ENCODE measurements at regions of chr12 and their contacts with region 1.

Region 1: DNA sequence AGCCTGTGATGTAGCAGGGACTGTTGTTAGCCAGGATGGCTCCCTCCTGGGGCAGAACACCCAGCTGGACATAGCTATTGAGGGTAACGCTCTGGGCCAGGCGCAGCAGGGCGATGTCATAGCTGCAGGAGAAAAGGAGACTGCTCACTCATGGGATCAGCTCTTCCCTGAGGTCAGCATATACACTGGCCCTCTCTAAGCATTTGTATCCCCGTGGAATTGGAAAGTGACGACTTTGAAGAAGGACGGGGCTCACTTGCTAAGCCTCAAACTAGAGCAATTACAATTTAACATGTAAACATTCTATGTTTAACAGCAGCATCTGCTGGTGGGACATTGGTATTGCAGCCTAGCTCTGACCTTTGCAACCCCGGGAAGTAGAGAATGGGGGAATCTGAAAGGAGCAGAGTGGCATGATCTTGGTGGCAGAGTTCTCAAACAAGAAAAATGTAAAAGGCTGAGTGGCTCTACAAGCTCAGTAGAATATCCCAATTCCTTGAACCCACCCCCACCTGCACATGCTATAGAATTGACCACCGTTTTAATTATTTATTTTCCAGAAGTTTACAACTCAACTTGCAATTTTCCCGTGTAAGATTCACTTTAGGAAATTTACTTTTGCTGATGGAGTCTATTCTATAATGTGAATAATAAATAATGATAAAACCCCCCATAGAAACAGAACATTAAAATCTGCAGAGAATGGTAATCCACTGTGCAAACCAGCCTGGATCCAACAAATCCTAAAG is 5.0 kb downstream of the CELA1 start:
- DNase-seq: peak; percentile 73
- CTCF ChIP-seq: peak; percentile 98

Region 2: GRCh38 chr12:50763639-50764285 is 577.7 kb before region 1 on chr12 and contains the start of gene ATF1:
- CTCF ChIA-PET with region 1: interaction called, 11 read pairs
- POLR2A ChIA-PET with region 1: no interaction called
- DNase-seq: peak; percentile 94
- CTCF ChIP-seq: no peak

Region 3: GRCh38 chr12:51047655-51048540 is 293.5 kb before region 1 on chr12 and contains the start of gene LETMD1:
- CTCF ChIA-PET with region 1: interaction called, 20 read pairs
- POLR2A ChIA-PET with region 1: no interaction called
- DNase-seq: peak; percentile 94
- CTCF ChIP-seq: peak; percentile 92

Region 4: DNA sequence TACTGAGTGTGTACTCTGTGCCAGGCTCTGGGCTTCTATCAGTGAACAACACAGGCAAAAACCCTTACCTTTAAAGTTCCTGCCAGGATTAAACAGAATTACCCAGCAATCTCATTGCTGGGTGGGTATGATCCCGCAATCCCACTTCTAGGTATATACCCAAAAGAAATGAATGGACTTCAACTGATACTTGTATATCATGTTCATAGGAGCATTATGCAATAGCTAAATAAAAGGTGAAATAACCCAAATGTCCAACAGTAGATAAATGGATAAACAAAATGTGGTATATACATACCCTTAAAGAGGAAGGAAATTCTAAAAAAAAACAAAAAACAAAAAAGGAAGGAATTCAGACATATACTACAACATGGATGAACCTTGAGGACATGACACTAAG is 88.2 kb before region 1 on chr12:
- CTCF ChIA-PET with region 1: interaction called, 14 read pairs
- POLR2A ChIA-PET with region 1: no interaction called
- DNase-seq: no peak
- CTCF ChIP-seq: no peak

Region 5: GRCh38 chr12:51270067-51270970 is 71.1 kb before region 1 on chr12 and contains the start of gene SMAGP:
- CTCF ChIA-PET with region 1: interaction called, 56 read pairs
- POLR2A ChIA-PET with region 1: no interaction called
- DNase-seq: peak; percentile 84
- CTCF ChIP-seq: peak; percentile 8

Region 6: GRCh38 chr12:51326762-51327439 is 14.5 kb before region 1 on chr12:
- CTCF ChIA-PET with region 1: interaction called, 54 read pairs
- POLR2A ChIA-PET with region 1: no interaction called
- DNase-seq: peak; percentile 68
- CTCF ChIP-seq: no peak

Region 7: GRCh38 chr12:51357374-51358047 is 16.1 kb after region 1 on chr12:
- CTCF ChIA-PET with region 1: interaction called, 128 read pairs
- POLR2A ChIA-PET with region 1: no interaction called
- DNase-seq: no peak
- CTCF ChIP-seq: no peak

Region 8: GRCh38 chr12:51521554-51522276 is 180.3 kb after region 1 on chr12:
- CTCF ChIA-PET with region 1: no interaction called
- POLR2A ChIA-PET with region 1: no interaction called
- DNase-seq: no peak
- CTCF ChIP-seq: no peak